GM10248 (cell line): ENCODE measurements at regions of chr1 and their contacts with region 1.

Region 1: DNA sequence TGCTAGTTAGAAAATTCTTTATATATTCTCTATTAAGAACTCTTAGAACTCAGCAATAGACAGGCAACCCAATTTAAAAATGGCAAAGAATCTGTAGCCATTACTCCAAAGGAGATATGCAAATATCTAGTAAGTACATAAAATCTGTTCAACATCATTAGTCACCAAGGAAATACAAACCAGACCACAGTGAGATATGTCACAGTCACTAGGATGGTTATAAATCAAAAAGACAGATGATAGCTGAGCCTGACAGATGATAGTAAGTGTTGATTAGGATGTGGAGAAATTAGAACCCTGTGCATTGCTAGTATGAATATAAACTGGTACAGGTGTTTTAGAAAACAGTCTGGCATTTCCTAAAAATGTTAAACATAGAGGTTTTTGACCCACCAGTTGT is 26.6 kb downstream of the SRSF11 start:
- DNase-seq: no peak
- CTCF ChIP-seq: no peak

Region 2: DNA sequence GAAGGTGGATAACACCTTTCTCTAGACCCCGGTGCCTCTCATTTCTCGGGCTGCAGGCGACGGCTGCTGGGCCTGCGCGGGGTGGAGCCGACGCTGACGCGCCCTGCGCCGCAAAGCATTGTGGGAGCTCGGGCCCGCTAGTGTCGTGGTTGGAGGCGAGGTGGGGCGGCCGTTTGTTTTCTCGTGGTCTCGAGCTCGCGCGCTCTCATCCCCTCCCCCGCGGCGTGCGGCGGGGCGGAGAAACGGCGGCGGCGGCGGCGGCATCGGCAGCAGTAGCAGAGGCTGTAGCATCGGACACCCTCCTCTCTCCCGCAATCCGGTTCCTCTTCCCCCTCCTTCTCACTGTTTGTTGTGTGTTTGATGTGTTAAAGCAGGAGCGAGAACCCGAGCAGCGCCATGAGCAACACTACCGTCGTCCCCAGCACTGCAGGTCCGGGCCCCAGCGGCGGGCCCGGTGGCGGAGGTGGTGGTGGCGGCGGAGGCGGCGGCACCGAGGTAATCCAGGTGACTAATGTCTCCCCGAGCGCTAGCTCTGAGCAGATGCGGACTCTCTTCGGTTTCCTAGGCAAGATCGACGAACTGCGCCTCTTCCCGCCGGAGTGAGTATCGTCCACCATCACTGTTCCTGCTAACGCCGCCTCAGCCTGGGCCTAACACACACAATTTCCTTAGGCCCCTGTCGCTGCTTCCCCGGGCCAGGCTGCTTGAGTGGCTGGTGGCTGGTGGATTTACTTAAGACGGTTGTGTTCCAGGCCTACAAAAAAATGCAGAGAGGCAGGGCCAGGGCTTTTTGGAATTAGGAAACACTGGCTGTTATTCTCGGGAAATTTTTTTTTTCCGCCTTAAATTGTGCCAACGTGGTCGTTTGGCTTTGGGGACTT is 26.3 kb before region 1 on chr1 and contains the start of gene SRSF11:
- CTCF ChIA-PET with region 1: no interaction called
- POLR2A ChIA-PET with region 1: no interaction called
- DNase-seq: peak; percentile 93
- CTCF ChIP-seq: no peak

Region 3: GRCh38 chr1:70234733-70235132 is 13.0 kb before region 1 on chr1:
- CTCF ChIA-PET with region 1: interaction called, 14 read pairs
- POLR2A ChIA-PET with region 1: no interaction called
- DNase-seq: no peak
- CTCF ChIP-seq: no peak